ENCODE measurements at regions of chr22 and their contacts with region 1.

Region 1: GRCh38 chr22:17084554-17085276 is at the start of gene IL17RA:
- DNase-seq: peak; percentile 91
- ATAC-seq: peak; percentile 97 to 99
- total RNA-seq, gene IL17RA: 11.6 to 15.4 TPM

Region 2: GRCh38 chr22:17013396-17014100 is 71.2 kb before region 1 on chr22:
- intact Hi-C with region 1: no loop called
- DNase-seq: no peak
- ATAC-seq: no peak

Region 3: GRCh38 chr22:17164392-17165024 is 79.8 kb after region 1 on chr22:
- intact Hi-C with region 1: loop called in 1 of 2 experiments (anchors 10 kb)
- DNase-seq: no peak
- ATAC-seq: no peak

Region 4: GRCh38 chr22:17171313-17172171 is 86.8 kb after region 1 on chr22:
- intact Hi-C with region 1: loop called (anchors 10 kb)
- DNase-seq: peak; percentile 94
- ATAC-seq: peak; percentile 94 to 96

Measured in left cardiac atrium (tissue), 4 donors.